Naive thymus-derived CD8-positive, alpha-beta T cell (primary cell): ENCODE measurements at regions of chr5 and their contacts with region 1.

Region 1: DNA sequence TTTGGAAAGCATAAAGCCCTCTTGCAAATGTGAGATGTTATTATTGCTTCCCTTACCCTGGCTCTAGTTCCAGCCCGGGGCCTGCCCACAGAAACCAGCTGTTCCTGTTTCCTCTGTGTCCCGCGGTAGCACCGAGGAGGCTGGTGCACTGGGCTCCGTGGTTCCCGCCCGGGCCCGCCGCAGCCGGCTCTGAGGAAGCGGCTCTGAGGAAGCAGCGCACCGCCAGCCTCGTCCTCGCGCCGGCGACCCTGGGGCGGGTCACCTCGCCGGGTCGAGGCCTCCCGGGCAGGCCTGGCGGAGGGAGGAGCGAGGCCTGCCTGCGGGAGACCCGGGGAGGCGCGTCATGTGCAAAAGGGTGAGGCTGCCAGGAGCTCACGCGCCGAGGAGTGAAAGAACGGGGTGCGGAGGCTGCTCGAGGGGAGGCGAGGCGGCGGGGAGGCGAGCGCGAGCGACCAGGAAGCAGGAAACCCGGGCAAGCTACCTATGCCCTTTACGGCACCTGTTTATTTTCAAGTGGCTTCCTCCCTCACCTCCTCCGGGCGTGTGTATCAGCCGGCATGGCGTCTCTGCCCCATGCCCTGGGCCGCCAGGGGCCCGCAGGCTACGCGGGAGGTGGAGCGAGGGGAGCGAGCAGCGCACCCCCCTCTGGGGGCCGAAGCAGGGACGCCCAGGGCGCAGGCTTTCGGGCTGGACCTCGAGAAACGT is 61.3 kb upstream of the MEGF10 start:
- DNase-seq: peak; percentile 21 to 70 (median 48)
- ATAC-seq: peak; percentile 84 to 87
- H3K4me3 Mint-ChIP-seq: peak overlapping the region; percentile 73 to 90 (median 78)
- H3K27ac Mint-ChIP-seq: peak overlapping the region; percentile 47 to 96 (median 90)
- H3K4me1 Mint-ChIP-seq: peaks cover 9 to 22% (median 19%) of the 10 kb centered on the region in 4 donors
- H3K27me3 Mint-ChIP-seq: no peaks in the 10 kb centered on the region

Region 2: DNA sequence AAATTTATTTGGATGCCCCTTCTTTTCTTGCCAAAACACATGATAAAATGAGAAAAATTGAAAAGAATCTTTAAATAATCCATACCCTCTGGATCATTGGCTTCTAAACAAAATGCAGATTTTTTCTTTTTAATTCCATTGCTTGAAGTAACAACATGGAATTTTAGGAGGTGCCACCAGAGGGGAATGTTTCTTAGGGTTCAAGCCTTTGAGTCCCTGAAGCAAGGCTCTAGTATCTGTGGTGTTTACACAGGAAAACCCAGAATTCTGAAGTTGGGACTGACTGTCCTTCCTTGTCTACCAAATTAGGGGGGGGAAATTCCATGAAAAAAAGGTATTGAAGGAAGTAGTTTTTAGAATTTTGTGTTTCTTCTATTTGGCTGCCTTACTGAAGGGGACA is 383.0 kb before region 1 on chr5:
- POLR2A ChIA-PET with region 1: interaction called, 10 read pairs
- DNase-seq: no peak
- ATAC-seq: no peak
- H3K4me3 Mint-ChIP-seq: peak overlapping the region in 3 of 10 donors; percentile 24 to 69 (median 54)
- H3K27ac Mint-ChIP-seq: peak overlapping the region; percentile 57 to 99 (median 94)
- H3K4me1 Mint-ChIP-seq: peaks cover 10 to 54% (median 32%) of the 10 kb centered on the region in 4 donors
- H3K27me3 Mint-ChIP-seq: no peaks in the 10 kb centered on the region

Region 3: DNA sequence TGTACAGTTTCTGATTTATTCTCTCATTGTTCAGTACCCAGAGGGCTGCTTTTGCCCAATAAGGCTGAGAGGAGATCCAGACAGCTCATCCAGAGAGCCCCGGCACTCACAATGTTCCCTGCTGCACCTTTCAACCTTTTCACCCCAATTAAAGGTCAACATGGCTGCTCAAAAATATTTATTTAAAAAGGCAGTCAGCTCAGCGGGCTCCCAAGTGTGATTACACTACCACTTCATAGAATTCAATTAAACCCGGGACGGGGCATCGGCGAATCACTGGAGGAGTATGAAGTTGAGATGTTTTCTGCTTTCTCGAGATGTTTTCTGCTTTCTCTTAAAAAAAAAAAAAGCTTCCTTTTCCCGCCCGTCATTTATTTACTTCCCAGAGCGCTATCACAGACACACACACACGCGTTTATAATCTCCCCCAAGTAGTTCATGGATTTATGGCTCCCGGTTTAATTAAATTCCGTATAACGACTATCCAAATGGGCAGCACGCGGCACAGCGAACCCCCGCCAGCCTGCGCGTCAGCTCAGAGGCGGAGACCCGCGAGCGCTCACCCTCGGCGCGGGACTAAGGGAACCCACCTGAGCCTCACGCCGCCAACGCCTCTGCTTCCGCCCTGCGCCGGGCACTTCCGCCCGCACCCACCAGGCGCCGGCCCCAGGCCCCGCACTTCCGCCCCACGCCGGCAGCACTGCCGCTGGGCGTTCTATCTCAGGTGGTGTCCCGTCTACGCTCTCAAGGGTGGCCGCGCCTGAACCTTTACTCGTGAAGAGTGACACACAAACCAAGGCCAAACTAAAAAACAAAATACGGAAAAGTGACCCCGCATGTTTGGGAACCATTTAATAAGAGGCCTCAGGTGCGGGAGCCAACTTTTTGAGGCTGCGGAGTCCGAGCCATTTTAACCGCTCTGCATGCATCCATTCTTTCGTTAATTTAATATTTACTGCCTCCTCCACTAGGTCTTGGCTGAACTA is 156.2 kb before region 1 on chr5 and contains the start of gene C5orf63:
- POLR2A ChIA-PET with region 1: interaction called, 11 read pairs
- DNase-seq: peak; percentile 55 to 80 (median 70)
- ATAC-seq: peak; percentile 97 to 99
- H3K4me3 Mint-ChIP-seq: peak within 1 kb of the TSS; percentile 88 to 95 (median 92)
- H3K27ac Mint-ChIP-seq: peak within 1 kb of the TSS; percentile 90 to 99 (median 92)
- H3K4me1 Mint-ChIP-seq: peaks cover 15 to 36% (median 22%) of the 10 kb centered on the region in 4 donors
- H3K27me3 Mint-ChIP-seq: no peaks in the 10 kb centered on the region
- polyA plus RNA-seq, gene C5orf63: 4.2 to 5.7 (median 4.6) TPM

Region 4: DNA sequence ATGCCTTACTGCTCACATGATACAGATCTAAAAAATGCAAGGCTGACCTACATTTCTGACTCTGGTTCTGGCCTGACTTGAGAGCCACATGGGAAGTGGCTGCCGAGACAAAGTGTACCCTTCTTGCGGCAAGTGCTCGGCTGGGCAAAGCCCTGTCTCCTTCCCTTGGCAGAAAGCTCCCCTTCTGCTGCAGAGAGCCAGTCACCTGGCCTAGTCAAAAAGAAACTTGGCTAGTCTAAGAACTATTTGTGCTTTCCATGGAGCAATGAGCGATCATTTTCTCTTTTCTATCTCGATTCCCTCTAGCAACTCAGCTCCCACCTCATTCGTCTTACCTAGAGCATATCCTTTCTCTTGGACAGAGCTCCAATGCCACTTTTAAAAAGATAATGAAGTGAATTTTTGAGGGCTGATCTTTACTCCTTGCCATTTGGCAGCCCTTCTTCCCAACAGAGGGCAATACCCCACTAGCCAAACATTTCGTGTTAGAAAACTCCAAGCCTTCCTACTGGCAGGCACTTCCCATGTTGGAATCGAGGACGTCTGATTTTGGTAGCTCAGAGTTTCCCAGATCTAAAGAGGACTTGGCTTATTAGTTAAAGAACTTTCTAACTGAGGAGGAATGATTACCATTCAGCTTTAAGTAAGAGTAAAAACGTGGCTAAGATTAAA is 180.0 kb after region 1 on chr5:
- POLR2A ChIA-PET with region 1: no interaction called
- DNase-seq: no peak
- ATAC-seq: no peak
- H3K4me3 Mint-ChIP-seq: no peak overlapping the region
- H3K27ac Mint-ChIP-seq: no peak overlapping the region
- H3K4me1 Mint-ChIP-seq: peaks cover 2 to 13% (median 4%) of the 10 kb centered on the region in 4 donors
- H3K27me3 Mint-ChIP-seq: peaks cover 0 to 10% (median 4%) of the 10 kb centered on the region in 5 donors